BJ (cell line): ENCODE measurements at regions of chr1 and their contacts with region 1.

Region 1: GRCh38 chr1:150869683-150870082 is 6.7 kb downstream of the ARNT start:
- DNase-seq: no peak
- H3K4me3 ChIP-seq: no peak overlapping the region
- H3K27me3 ChIP-seq: no peaks in the 10 kb centered on the region
- CTCF ChIP-seq: no peak

Region 2: DNA sequence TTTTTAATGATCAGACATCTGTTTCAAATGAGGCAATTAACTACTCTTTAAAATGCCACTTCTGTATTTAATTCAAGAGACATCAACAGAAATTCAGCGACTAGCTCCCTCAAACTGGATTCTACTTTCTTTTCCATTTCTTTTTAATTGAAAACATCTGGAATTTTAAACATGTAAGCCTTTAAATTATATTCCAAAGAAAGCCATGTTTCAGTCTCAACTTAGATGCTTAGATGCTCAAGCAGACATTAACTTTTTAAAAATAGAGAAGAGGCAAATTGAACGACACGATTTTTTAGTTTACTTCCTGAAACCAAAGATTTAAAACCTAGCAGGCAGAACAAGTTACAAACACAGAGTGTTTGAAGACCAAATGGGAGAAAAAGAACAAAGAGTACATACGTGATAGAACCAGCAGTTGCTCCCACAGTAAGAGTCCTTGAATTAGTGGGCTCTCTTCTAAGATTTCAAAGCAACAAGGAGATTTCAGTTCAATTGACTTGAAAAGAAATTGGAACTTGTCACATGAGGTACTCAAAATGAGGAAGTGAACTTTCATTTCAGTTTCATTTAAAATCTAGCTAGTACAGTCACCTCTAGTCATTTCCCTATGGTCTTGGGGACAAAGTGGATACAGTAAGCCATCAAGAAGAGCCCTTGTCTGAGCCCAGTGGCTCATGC is 104.2 kb before region 1 on chr1 and contains the start of gene CTSS:
- CTCF ChIA-PET with region 1: no interaction called
- POLR2A ChIA-PET with region 1: no interaction called
- DNase-seq: peak; percentile 8
- H3K4me3 ChIP-seq: peak within 1 kb of the TSS; percentile 4; the same call in 1 of the 2 replicates
- H3K27me3 ChIP-seq: no peaks in the 10 kb centered on the region
- CTCF ChIP-seq: no peak
- polyA plus RNA-seq, gene CTSS: 1.1 and 1.5 TPM in 2 replicates

Region 3: DNA sequence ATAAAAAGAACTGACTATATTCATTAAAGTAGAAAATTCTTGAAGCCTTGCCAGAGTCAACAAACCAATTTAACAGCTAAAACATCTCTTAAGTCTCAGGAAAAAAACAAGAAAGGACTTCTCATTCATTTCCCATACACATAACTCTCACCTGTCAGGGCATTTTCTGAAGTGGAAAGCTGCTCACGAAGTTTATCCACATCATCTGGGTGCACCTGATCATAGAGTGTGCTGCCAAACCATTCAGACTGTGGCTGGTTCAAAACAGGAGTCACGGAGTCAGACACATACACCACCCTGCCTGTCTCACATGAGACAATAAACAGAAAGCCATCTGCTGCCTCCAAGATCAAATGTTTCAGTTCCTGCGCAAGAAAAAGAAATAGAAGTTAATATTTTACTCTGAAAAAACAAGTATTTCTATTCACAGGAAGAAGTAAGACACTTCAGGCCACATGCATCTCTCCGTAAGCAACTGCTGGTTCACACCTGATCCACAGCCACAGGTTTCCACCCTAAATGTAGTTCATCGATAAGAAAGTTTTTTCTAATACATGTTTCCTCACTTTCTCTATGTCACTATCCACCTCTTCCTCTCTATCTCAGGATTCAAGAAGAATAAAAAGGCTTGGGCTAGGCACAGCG is 33.4 kb before region 1 on chr1:
- CTCF ChIA-PET with region 1: no interaction called
- POLR2A ChIA-PET with region 1: interaction called, 12 read pairs
- DNase-seq: no peak
- H3K4me3 ChIP-seq: no peak overlapping the region
- H3K27me3 ChIP-seq: no peaks in the 10 kb centered on the region
- CTCF ChIP-seq: no peak

Region 4: GRCh38 chr1:150915192-150915591 is 45.5 kb after region 1 on chr1:
- CTCF ChIA-PET with region 1: no interaction called
- POLR2A ChIA-PET with region 1: no interaction called
- DNase-seq: no peak
- H3K4me3 ChIP-seq: no peak overlapping the region
- H3K27me3 ChIP-seq: no peaks in the 10 kb centered on the region
- CTCF ChIP-seq: no peak